ENCODE measurements at regions of chr2 and their contacts with region 1.

Region 1: GRCh38 chr2:106073678-106074406 is 120.3 kb downstream of the UXS1 start:
- DNase-seq: no peak
- H3K4me3 ChIP-seq: no peak overlapping the region
- H3K27ac ChIP-seq: no peak overlapping the region
- H3K4me1 ChIP-seq: no peaks in the 10 kb centered on the region
- H3K27me3 ChIP-seq: no peaks in the 10 kb centered on the region
- CTCF ChIP-seq: no peak
- EP300 ChIP-seq: no peak
- POLR2A ChIP-seq: no peak

Region 2: GRCh38 chr2:105576440-105577252 is 497.2 kb before region 1 on chr2:
- intact Hi-C with region 1: loop called in 1 of 4 experiments (anchors 10 kb)
- DNase-seq: peak in 4 of 5 donors; percentile 31 to 58 (median 42)
- H3K4me3 ChIP-seq: no peak overlapping the region
- H3K27ac ChIP-seq: peak overlapping the region in 1 of 2 donors; percentile 52
- H3K4me1 ChIP-seq: peaks cover 5% of the 10 kb centered on the region
- H3K27me3 ChIP-seq: no peaks in the 10 kb centered on the region
- CTCF ChIP-seq: peak in 2 of 3 donors; percentile 9 to 30
- EP300 ChIP-seq: no peak
- POLR2A ChIP-seq: no peak

Measured in ovary (tissue), 10 donors.